PC-3 (cell line): ENCODE measurements at regions of chr1 and their contacts with region 1.

Region 1: GRCh38 chr1:26787706-26788514 is at the start of gene PIGV:
- DNase-seq: peak; percentile 79
- ATAC-seq: peak; percentile 70
- H3K4me3 ChIP-seq: peak within 1 kb of the TSS; percentile 77
- H3K27ac ChIP-seq: peak within 1 kb of the TSS; percentile 90
- H3K4me1 ChIP-seq: peaks cover 50% of the 10 kb centered on the region
- H3K27me3 ChIP-seq: no peaks in the 10 kb centered on the region
- CTCF ChIP-seq: no peak
- total RNA-seq, gene PIGV: 6.0 and 8.8 TPM in 2 replicates

Region 2: DNA sequence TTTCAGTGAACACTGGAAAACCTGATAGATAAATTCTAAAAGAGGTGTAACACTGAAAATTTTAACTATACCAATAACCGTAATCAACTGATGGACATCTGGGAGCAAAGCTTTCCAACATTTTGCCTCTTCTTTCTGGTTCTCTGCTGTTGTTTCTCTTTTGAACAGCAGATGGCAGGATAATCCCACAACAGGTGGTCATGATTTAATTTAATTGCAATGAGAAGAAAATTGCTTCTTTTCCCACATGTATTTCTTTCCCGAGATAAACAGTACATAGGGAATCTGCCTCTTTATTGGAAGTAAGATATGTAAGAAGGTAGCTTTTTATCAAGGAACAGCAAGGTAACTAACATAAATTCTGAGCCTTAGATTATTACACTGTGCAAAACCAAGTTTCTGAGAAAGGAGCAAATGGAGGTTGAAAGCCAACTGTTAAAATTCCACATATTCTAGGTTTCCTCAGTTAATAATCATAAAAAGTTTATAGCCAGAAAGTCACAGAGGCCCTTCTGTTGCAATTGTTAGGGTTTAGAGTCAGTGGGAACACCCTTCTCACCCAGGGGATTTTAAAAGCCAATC is 185.4 kb before region 1 on chr1:
- CTCF ChIA-PET with region 1: interaction called, 13 read pairs
- POLR2A ChIA-PET with region 1: interaction called, 5 read pairs
- intact Hi-C with region 1: loop called (anchors 1 kb)
- DNase-seq: peak; percentile 87
- ATAC-seq: peak; percentile 49
- H3K4me3 ChIP-seq: no peak overlapping the region
- H3K27ac ChIP-seq: no peak overlapping the region
- H3K4me1 ChIP-seq: peaks cover 7% of the 10 kb centered on the region; the same call in 1 of the 2 replicates
- H3K27me3 ChIP-seq: no peaks in the 10 kb centered on the region
- CTCF ChIP-seq: peak; percentile 93

Region 3: GRCh38 chr1:26677306-26678115 is 110.4 kb before region 1 on chr1:
- CTCF ChIA-PET with region 1: interaction called, 44 read pairs
- POLR2A ChIA-PET with region 1: interaction called, 10 read pairs
- intact Hi-C with region 1: loop called (anchors 1 kb)
- DNase-seq: peak; percentile 93
- ATAC-seq: peak; percentile 100
- H3K4me3 ChIP-seq: peak overlapping the region; percentile 27; the same call in 1 of the 2 replicates
- H3K27ac ChIP-seq: no peak overlapping the region
- H3K4me1 ChIP-seq: peaks cover 9% of the 10 kb centered on the region
- H3K27me3 ChIP-seq: no peaks in the 10 kb centered on the region
- CTCF ChIP-seq: peak; percentile 90

Region 4: GRCh38 chr1:26695356-26696118 is 92.4 kb before region 1 on chr1 and contains the start of gene ARID1A:
- CTCF ChIA-PET with region 1: interaction called, 12 read pairs
- POLR2A ChIA-PET with region 1: interaction called, 9 read pairs
- intact Hi-C with region 1: loop called (anchors 1 kb)
- DNase-seq: peak; percentile 96
- ATAC-seq: peak; percentile 52
- H3K4me3 ChIP-seq: peak within 1 kb of the TSS; percentile 86
- H3K27ac ChIP-seq: peak within 1 kb of the TSS; percentile 81
- H3K4me1 ChIP-seq: peaks cover 49% of the 10 kb centered on the region
- H3K27me3 ChIP-seq: no peaks in the 10 kb centered on the region
- CTCF ChIP-seq: no peak
- total RNA-seq, gene ARID1A: 43.8 and 78.0 TPM in 2 replicates

Region 5: DNA sequence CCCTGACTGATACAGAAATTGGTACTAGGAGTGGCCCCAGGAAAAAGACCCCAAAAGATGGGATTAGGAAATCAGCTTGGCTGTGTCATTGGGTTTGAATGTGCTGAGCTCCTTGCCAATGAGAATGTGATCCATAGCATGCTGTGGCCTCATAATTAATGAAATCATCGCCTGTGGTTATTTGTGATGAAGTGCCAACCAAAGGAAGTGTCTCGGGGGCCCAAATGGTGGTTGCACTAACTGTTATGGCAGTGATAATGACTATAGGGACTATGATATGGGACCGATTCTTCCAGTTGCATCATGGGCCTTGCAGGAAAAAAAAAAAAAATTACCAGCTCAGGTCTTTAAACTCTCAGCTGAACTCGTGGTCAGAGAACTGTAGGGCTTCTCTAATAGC is 23.1 kb after region 1 on chr1:
- CTCF ChIA-PET with region 1: interaction called, 11 read pairs
- POLR2A ChIA-PET with region 1: no interaction called
- intact Hi-C with region 1: no loop called
- DNase-seq: no peak
- ATAC-seq: no peak
- H3K4me3 ChIP-seq: no peak overlapping the region
- H3K27ac ChIP-seq: no peak overlapping the region
- H3K4me1 ChIP-seq: no peaks in the 10 kb centered on the region
- H3K27me3 ChIP-seq: no peaks in the 10 kb centered on the region
- CTCF ChIP-seq: no peak

Region 6: DNA sequence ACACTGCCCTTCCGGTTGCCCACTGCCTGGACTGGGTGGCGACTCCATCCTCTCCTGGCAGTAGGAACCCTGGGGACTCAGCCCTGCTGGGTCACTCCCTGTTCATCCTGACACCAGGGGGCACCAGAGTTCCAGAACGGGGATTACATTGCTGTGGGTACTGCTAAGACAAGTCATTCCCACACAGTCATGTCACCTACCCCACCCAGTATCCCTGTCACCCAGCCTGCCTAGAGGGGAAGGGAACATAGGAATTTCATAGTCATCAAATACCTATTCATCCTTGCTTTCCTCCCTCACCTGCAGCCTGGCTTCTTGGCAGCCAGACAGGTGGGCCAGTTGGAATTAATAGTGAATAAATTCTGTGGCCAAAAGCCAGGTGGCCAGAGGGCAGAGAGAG is 65.2 kb after region 1 on chr1:
- CTCF ChIA-PET with region 1: no interaction called
- POLR2A ChIA-PET with region 1: interaction called, 14 read pairs
- intact Hi-C with region 1: no loop called
- DNase-seq: peak; percentile 99
- ATAC-seq: peak; percentile 87
- H3K4me3 ChIP-seq: no peak overlapping the region
- H3K27ac ChIP-seq: peak overlapping the region; percentile 89
- H3K4me1 ChIP-seq: peaks cover 57% of the 10 kb centered on the region
- H3K27me3 ChIP-seq: no peaks in the 10 kb centered on the region
- CTCF ChIP-seq: peak; percentile 91

Region 7: DNA sequence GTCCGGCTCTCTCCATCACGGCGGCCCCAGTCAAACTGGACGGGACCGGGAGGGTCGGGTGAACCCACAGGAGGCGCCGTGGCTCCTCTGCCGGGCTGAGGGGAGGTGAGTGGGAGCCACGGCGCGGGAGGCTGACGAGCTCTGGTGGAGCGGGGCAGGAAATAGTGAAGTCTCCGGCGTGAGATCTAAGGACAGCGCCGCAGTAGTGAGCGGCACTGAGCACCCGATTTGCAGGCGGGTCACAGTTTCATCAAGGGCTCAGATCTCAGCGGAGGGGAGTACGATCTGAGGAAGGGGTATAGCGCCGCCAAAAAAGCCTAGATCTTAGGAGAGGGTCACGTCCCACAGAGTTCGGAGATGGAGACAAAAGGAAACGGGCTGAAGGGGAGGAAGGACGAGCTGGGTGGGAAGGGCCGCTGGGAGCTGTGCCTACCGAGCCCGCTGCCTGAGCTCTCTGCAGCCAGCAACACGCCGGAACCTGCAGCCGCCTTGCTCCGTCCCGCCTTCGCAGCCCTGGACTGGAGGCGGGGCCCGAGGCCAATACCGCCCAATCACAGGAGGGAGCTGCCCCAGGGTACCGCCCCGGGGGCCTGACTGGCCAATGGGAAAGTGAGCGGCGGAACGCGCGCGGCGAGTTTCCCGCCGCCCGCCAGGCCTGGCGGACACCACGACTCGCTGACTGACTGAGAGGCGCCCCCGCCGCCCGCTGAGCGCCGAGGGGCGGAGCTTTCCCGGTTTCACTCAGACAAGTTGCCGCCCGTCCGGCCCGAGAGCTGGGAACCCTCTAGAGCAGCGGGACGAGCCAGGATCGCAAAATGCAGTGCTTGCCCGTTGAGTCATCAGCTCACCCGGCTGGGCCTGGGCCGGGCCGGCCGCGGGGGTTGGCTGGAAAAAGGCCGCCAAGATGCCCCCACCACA is 77.0 kb after region 1 on chr1:
- CTCF ChIA-PET with region 1: no interaction called
- POLR2A ChIA-PET with region 1: no interaction called
- intact Hi-C with region 1: loop called (anchors 5 kb)
- DNase-seq: peak; percentile 99
- ATAC-seq: peak; percentile 64
- H3K4me3 ChIP-seq: peak overlapping the region; percentile 90
- H3K27ac ChIP-seq: peak overlapping the region; percentile 95
- H3K4me1 ChIP-seq: peaks cover 43% of the 10 kb centered on the region
- H3K27me3 ChIP-seq: no peaks in the 10 kb centered on the region
- CTCF ChIP-seq: 0 out of 2 replicates have a peak, but pooled peaks have one; percentile 20